Mammary epithelial cell (primary cell): ENCODE measurements at regions of chr3 and their contacts with region 1.

Region 1: GRCh38 chr3:159813822-159814523 is 174.7 kb upstream of the IL12A start:
- DNase-seq: peak; percentile 89
- H3K4me3 ChIP-seq: no peak overlapping the region
- H3K27ac ChIP-seq: peak overlapping the region; percentile 89
- H3K4me1 ChIP-seq: peaks cover 25% of the 10 kb centered on the region
- H3K27me3 ChIP-seq: no peaks in the 10 kb centered on the region
- CTCF ChIP-seq: no peak

Region 2: DNA sequence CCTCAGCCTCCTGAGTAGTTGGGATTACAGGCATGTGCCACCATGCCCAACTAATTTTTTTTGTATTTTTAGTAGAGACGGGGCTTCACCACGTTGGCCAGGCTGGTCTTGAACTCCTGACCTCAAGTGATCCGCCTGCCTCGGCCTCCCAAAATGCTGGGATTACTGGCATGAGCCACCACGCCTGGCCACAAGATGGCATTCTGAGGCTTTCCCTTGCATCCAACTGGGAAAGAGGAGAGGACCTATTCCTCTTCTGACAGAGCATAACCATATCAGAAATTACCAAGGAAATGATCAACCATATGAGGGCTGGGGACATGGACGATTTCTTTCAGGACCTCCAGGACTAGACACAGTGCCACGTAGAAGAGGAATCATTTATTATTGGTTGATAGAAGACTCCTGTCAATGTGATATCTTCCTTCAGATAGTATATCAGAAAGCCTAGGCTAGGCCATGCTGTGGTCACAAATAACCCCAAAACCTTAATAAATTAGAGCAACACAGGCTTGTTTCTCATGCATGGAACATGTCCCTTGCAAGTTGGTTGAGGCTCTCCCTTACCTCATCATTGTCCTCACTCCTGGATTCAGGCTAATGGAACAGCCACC is 197.7 kb before region 1 on chr3:
- CTCF ChIA-PET with region 1: no interaction called
- dilution Hi-C with region 1: no loop called
- in situ Hi-C with region 1: loop called in 1 of 2 experiments (anchors 5 kb)
- intact Hi-C with region 1: no loop called
- DNase-seq: peak; percentile 48
- H3K4me3 ChIP-seq: no peak overlapping the region
- H3K27ac ChIP-seq: no peak overlapping the region
- H3K4me1 ChIP-seq: peaks cover 14% of the 10 kb centered on the region
- H3K27me3 ChIP-seq: no peaks in the 10 kb centered on the region
- CTCF ChIP-seq: peak; percentile 49 to 70